ENCODE measurements at regions of chr11 and their contacts with region 1.

Region 1: GRCh38 chr11:122711831-122712381 is 56.4 kb downstream of the UBASH3B start:
- DNase-seq: peak; percentile 77 to 95 (median 89)
- H3K4me3 ChIP-seq: peak overlapping the region in 1 of 7 experiments; percentile 19
- H3K27ac ChIP-seq: no peak overlapping the region
- H3K4me1 ChIP-seq: peaks cover 24 to 78% (median 46%) of the 10 kb centered on the region in 4 experiments
- H3K27me3 ChIP-seq: no peaks in the 10 kb centered on the region

Region 2: DNA sequence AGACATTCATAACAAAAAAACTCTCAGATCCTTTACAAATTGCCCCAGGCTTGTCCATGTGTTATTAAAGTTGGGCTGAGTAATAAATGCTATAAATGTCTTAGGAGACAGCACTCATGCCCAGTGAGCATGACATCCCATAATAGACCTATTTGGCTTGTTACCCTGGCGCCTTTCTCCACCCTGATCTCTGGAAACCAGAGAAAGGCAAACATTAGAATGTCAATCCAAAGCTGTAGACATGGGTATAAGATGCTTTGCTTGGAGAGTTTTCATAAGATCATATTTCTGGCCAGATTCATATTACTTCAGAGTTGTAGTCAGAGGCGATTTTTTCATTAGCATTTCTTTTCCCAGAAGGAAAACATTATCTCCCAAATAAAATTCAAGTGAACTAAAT is 217.7 kb before region 1 on chr11:
- CTCF ChIA-PET with region 1: no interaction called
- POLR2A ChIA-PET with region 1: no interaction called
- DNase-seq: no peak
- H3K4me3 ChIP-seq: no peak overlapping the region
- H3K27ac ChIP-seq: no peak overlapping the region
- H3K4me1 ChIP-seq: peaks cover 0 to 18% (median 9%) of the 10 kb centered on the region in 4 experiments
- H3K27me3 ChIP-seq: no peaks in the 10 kb centered on the region

Region 3: GRCh38 chr11:122634497-122634896 is 77.4 kb before region 1 on chr11:
- CTCF ChIA-PET with region 1: interaction called, 12 read pairs
- POLR2A ChIA-PET with region 1: interaction called, 4 read pairs
- DNase-seq: peak in 1 of 3 donors; percentile 15
- H3K4me3 ChIP-seq: no peak overlapping the region
- H3K27ac ChIP-seq: no peak overlapping the region
- H3K4me1 ChIP-seq: peaks cover 0 to 19% (median 2%) of the 10 kb centered on the region in 4 experiments
- H3K27me3 ChIP-seq: no peaks in the 10 kb centered on the region

Region 4: GRCh38 chr11:122655527-122656072 is 56.3 kb before region 1 on chr11 and contains the start of gene UBASH3B:
- CTCF ChIA-PET with region 1: interaction called, 12 read pairs
- POLR2A ChIA-PET with region 1: interaction called, 3 read pairs
- DNase-seq: peak; percentile 66 to 83 (median 70)
- H3K4me3 ChIP-seq: peak within 1 kb of the TSS; percentile 75 to 94 (median 84)
- H3K27ac ChIP-seq: peak within 1 kb of the TSS in 1 of 2 experiments; percentile 57
- H3K4me1 ChIP-seq: peaks cover 11 to 48% (median 37%) of the 10 kb centered on the region in 4 experiments
- H3K27me3 ChIP-seq: no peaks in the 10 kb centered on the region

Region 5: GRCh38 chr11:122697636-122698167 is 14.2 kb before region 1 on chr11:
- CTCF ChIA-PET with region 1: interaction called, 24 read pairs
- POLR2A ChIA-PET with region 1: interaction called, 3 read pairs
- DNase-seq: peak; percentile 85 to 99 (median 98)
- H3K4me3 ChIP-seq: peak overlapping the region in 4 of 7 experiments; percentile 17 to 55 (median 38)
- H3K27ac ChIP-seq: peak overlapping the region in 1 of 2 experiments; percentile 71
- H3K4me1 ChIP-seq: peaks cover 27 to 67% (median 58%) of the 10 kb centered on the region in 4 experiments
- H3K27me3 ChIP-seq: no peaks in the 10 kb centered on the region

Region 6: DNA sequence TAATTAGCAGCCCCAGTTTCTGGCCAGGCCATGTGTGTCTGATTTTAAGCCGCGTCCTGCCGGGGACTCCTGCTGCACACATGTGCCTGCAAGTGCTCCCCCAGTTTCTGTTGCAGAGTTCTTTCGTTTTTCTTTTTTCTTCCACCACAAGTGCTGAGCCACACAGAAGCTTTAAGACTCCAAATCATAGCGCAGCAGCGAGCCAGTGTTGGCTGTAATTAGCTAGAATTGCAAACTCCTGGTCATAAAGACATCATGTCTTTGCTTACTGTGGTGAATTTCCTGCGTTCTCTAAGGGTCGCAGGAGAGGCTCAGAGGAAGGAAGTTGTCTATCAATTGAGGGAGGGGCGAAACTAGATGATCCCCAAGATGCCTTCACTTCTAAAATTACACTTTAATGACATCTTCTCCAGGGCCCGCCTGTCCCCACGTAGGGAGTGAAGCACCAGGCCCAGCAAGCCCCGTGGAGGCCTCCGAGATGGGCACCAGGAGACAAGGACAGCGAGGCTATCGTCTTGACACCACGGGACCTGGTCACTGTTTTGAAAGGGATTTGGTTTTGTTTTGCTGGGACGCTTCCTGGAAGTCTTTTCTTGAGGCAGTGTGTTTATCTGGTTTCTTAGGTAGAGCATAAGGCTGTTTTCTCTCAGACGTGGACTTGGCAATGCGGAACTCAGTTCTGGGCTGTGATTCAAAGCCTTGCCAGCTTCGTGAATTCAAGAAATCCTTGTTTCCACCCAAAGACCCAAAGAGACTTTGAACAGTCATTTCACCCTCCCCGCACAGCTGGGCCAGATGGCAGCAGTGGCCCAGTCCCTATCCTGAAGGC is 15.4 kb after region 1 on chr11:
- CTCF ChIA-PET with region 1: interaction called, 19 read pairs
- POLR2A ChIA-PET with region 1: interaction called, 3 read pairs
- DNase-seq: peak in 1 of 3 donors; percentile 50
- H3K4me3 ChIP-seq: peak overlapping the region in 5 of 7 experiments; percentile 28 to 49 (median 32)
- H3K27ac ChIP-seq: peak overlapping the region in 1 of 2 experiments; percentile 3
- H3K4me1 ChIP-seq: peaks cover 16 to 59% (median 44%) of the 10 kb centered on the region in 4 experiments
- H3K27me3 ChIP-seq: no peaks in the 10 kb centered on the region

Measured in common myeloid progenitor, CD34-positive (primary cell).